CD8-positive, alpha-beta T cell (primary cell): ENCODE measurements at regions of chr5 and their contacts with region 1.

Region 1: GRCh38 chr5:90529194-90529938 is at the start of gene LYSMD3:
- DNase-seq: peak; percentile 94 to 99 (median 98)
- ATAC-seq: peak; percentile 91
- H3K4me3 ChIP-seq: peak within 1 kb of the TSS; percentile 90 to 98
- H3K4me3 Mint-ChIP-seq: peak within 1 kb of the TSS; percentile 99
- H3K27ac ChIP-seq: peak within 1 kb of the TSS; percentile 95 to 98
- H3K27ac Mint-ChIP-seq: peak within 1 kb of the TSS; percentile 99
- H3K4me1 ChIP-seq: peaks cover 27% of the 10 kb centered on the region
- H3K4me1 Mint-ChIP-seq: peaks cover 37% of the 10 kb centered on the region
- H3K27me3 ChIP-seq: no peaks in the 10 kb centered on the region
- H3K27me3 Mint-ChIP-seq: peaks cover 11% of the 10 kb centered on the region
- CTCF ChIP-seq: no peak
- total RNA-seq, gene LYSMD3: 25.8 to 30.9 TPM

Region 2: DNA sequence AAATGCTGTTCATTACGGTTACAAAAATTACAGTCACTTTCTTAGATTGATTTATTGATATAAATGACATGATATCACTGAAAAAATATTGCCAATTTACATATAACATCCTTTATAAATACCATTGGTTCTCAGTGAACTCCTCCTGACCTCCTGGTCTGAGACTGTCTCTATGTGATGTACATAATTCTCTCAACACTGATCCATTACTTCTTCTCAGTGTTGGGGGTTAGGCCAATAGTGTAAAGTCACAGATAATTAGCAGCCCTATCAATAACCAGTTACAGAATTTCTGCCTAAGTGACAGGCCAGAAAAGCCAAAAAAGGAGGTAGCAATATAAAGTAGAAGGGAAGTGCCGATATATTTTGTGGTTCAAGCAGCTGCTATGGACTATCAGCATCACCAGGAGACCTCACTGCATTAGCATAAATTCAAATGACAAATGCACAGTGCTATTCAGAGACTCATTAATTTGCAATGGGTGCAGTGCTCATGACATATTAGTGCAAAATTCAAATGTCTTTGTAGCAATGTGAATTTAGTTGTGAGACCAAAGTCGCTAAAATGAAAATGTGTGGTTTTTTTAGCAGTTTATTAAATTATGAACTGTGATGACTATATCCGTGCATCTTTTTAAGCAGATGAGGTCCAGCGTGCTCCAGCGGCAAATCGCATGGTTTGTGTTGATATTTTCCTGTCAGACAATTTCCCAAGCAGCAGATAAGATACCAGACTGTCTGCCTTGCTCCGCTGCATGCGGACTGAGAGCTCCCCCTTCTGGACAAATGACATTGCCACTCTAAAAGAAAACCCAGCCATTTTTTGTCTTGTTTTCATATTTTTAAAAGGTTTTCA is 264.4 kb before region 1 on chr5:
- CTCF ChIA-PET with region 1: no interaction called
- POLR2A ChIA-PET with region 1: no interaction called
- intact Hi-C with region 1: loop called in 1 of 2 experiments (anchors 5 kb)
- DNase-seq: peak; percentile 2 to 59 (median 41)
- ATAC-seq: no peak
- H3K4me3 ChIP-seq: no peak overlapping the region
- H3K4me3 Mint-ChIP-seq: no peak overlapping the region
- H3K27ac ChIP-seq: no peak overlapping the region
- H3K27ac Mint-ChIP-seq: no peak overlapping the region
- H3K4me1 ChIP-seq: no peaks in the 10 kb centered on the region
- H3K4me1 Mint-ChIP-seq: peaks cover 2% of the 10 kb centered on the region
- H3K27me3 ChIP-seq: no peaks in the 10 kb centered on the region
- H3K27me3 Mint-ChIP-seq: peaks cover 11% of the 10 kb centered on the region
- CTCF ChIP-seq: peak; percentile 74

Region 3: DNA sequence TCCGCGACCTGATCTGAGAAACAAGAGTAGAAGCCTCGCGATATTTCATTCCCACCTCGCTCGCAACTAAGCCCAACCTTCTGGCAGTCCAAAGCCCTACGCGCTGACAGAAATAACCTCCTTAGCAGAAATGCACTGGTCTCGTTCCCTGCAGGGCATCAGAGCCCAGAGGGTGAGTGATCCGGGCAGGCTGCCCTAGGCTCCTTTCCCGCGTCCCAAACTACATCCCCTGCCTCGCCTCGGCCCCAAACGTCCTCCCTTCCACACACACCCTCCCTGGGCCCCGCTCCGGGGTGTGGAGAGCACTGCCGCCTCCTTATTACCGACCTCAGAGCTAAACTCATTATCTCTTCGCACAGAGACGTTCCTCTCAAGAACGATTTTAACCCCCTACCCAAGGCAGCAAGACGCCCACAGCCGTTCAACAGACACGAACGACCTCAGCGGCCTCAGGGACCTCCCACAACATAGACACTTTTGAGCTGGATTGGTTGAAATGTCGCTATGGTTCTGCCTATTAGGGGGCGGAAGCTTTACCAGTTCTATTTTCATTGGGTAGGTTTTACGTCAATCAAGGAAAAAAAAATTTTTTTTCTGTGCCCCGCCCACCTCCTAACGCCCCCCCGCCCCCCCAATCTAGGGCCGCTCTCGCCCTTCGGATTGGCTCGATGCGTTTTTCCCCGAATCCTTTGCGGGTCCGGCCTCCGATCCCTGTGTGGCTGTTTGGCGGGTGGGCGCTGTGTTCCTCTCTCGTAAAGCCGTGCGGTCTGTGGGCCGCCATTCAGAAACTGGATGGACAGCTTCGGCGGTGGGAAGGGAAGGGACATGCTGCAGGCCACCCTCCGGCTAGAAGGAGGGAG is 119.8 kb before region 1 on chr5 and contains the start of gene CETN3:
- CTCF ChIA-PET with region 1: interaction called, 7 read pairs
- POLR2A ChIA-PET with region 1: interaction called, 23 read pairs
- intact Hi-C with region 1: loop called (anchors 1 kb)
- DNase-seq: peak; percentile 81 to 96 (median 89)
- ATAC-seq: peak; percentile 90
- H3K4me3 ChIP-seq: peak within 1 kb of the TSS; percentile 91 to 99
- H3K4me3 Mint-ChIP-seq: no peak within 1 kb of the TSS
- H3K27ac ChIP-seq: peak within 1 kb of the TSS; percentile 93 to 95
- H3K27ac Mint-ChIP-seq: no peak within 1 kb of the TSS
- H3K4me1 ChIP-seq: peaks cover 7% of the 10 kb centered on the region
- H3K4me1 Mint-ChIP-seq: peaks cover 24% of the 10 kb centered on the region
- H3K27me3 ChIP-seq: no peaks in the 10 kb centered on the region
- H3K27me3 Mint-ChIP-seq: no peaks in the 10 kb centered on the region
- CTCF ChIP-seq: no peak
- total RNA-seq, gene CETN3: 2.4 to 3.4 TPM